Calu3 (cell line): ENCODE measurements at regions of chr2 and their contacts with region 1.

Region 1: DNA sequence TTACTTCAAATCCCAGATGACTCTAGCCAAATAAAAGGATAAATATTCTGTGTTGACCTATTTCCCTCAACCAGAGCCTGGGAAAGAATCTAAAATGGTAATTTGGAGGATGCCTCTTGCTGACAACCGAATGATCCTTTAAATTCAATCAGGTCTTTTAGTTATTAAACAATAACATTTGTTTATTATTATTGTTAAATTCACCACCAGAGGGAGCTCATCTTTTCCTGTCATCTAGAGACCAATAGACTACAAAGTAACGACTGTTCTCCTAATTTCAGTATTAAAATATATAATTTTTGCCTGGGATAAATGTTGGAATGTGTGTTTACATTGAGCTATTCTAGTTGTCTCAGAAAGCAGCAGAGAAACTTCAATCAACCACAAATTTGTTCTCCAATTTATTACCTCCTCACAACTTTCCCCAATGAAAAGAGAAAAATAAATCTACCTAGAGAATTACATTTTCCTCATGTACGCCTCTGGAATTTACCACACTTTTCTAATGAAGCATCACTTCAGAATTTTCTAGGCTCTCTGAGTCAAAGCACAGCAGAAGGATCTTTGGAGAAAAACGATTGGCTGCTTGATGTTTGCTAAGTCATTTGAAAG is 142.7 kb downstream of the SCG2 start:
- DNase-seq: no peak
- H3K4me3 Mint-ChIP-seq: no peak overlapping the region
- H3K27ac Mint-ChIP-seq: no peak overlapping the region
- H3K4me1 Mint-ChIP-seq: peaks cover 9% of the 10 kb centered on the region
- H3K27me3 Mint-ChIP-seq: no peaks in the 10 kb centered on the region
- CTCF ChIP-seq: peak; percentile 25

Region 2: GRCh38 chr2:222100704-222101699 is 1358.4 kb before region 1 on chr2:
- CTCF ChIA-PET with region 1: no interaction called
- intact Hi-C with region 1: no loop called
- DNase-seq: no peak
- H3K4me3 Mint-ChIP-seq: no peak overlapping the region
- H3K27ac Mint-ChIP-seq: no peak overlapping the region
- H3K4me1 Mint-ChIP-seq: no peaks in the 10 kb centered on the region
- H3K27me3 Mint-ChIP-seq: peaks cover 77% of the 10 kb centered on the region
- CTCF ChIP-seq: no peak

Region 3: GRCh38 chr2:223601932-223602666 is 142.7 kb after region 1 on chr2 and contains the start of gene SCG2:
- CTCF ChIA-PET with region 1: interaction called, 4 read pairs
- intact Hi-C with region 1: loop called (anchors 1 kb)
- DNase-seq: peak; percentile 75
- H3K4me3 Mint-ChIP-seq: peak within 1 kb of the TSS; percentile 8
- H3K27ac Mint-ChIP-seq: no peak within 1 kb of the TSS
- H3K4me1 Mint-ChIP-seq: no peaks in the 10 kb centered on the region
- H3K27me3 Mint-ChIP-seq: no peaks in the 10 kb centered on the region
- CTCF ChIP-seq: no peak
- total RNA-seq, gene SCG2: 0.52 and 0.56 TPM in 2 replicates

Region 4: DNA sequence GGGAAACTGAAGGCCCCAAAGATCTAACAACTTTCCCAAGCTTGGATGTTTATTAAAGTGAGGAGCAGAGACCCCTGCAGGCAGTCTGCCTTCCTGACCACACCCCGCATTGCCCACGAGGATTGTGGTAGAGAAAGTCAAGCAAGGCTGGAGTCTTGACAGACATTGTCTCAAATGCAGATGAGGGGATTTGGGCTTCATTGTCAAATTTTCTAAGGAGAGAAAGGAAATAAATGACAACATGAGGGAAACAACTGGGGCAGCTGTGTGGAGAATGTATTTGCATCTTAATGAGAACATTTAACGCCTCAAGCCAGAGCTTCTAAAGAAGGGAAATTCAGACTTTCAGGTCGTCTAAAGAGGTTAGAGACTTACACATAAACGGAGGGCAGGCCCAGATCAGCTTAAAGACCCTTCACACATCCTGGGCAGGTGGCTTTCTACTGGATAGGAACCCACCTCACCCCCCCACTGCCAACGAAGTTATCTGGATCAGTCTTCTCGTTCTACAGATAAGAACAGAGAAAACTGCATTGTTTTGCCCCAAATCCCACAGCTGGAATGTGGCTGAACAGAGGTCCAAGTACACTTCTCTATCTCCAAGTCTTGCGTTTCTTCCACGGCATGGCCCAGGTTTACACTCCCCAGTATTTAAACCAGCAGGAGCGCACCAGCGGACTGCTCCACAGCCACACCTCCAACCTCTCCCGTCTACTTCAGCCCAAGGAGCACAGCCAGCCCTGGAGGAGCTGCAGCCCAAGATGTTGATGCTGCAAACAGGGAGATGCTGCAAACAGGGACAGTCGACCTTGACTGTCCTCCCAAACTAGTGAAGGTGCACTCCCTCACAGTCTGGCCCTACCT is 159.0 kb after region 1 on chr2:
- CTCF ChIA-PET with region 1: no interaction called
- intact Hi-C with region 1: no loop called
- DNase-seq: no peak
- H3K4me3 Mint-ChIP-seq: no peak overlapping the region
- H3K27ac Mint-ChIP-seq: no peak overlapping the region
- H3K4me1 Mint-ChIP-seq: peaks cover 20% of the 10 kb centered on the region
- H3K27me3 Mint-ChIP-seq: no peaks in the 10 kb centered on the region
- CTCF ChIP-seq: no peak

Region 5: GRCh38 chr2:223674998-223675609 is 215.7 kb after region 1 on chr2:
- CTCF ChIA-PET with region 1: no interaction called
- intact Hi-C with region 1: loop called (anchors 10 kb)
- DNase-seq: peak; percentile 69
- H3K4me3 Mint-ChIP-seq: no peak overlapping the region
- H3K27ac Mint-ChIP-seq: peak overlapping the region; percentile 25
- H3K4me1 Mint-ChIP-seq: peaks cover 27% of the 10 kb centered on the region
- H3K27me3 Mint-ChIP-seq: no peaks in the 10 kb centered on the region
- CTCF ChIP-seq: peak; percentile 70

Region 6: DNA sequence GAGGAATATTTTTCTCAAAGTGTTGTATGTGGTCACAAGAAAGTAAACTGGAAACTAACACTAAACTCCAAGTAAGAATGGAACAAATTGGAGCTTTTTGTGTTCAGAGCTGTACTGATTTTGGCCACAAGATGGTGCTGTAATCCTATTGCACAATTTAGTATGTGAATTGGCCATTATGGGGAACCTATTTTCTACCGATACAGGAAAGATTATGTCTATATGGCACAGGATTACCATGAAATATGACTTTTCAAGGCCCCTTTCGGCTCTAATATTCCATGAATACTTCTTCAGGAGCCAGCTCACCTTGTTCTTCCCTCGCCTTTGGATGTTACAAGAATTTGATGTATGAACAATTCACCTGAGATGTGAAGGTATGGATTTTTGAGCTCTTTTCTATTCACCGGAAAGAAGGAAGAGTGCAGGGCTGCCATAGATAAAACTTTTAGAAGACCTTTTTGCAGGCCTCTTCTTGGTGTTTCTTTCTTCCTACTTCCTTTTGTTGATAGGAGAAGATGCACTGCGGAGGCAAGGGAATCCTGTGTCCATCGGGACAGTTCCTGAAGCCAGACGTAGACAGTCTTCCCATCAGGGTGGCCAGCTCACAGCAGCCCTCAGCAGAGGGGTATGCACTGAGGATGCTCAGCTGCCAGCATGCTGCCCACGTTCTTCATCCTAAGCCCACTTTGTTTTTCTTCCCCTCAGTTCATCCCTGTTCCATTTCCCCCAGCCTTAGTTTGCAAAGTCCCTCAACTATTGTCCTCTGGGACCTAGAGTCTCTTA is 511.1 kb after region 1 on chr2:
- CTCF ChIA-PET with region 1: no interaction called
- intact Hi-C with region 1: no loop called
- DNase-seq: peak; percentile 62
- H3K4me3 Mint-ChIP-seq: no peak overlapping the region
- H3K27ac Mint-ChIP-seq: no peak overlapping the region
- H3K4me1 Mint-ChIP-seq: no peaks in the 10 kb centered on the region
- H3K27me3 Mint-ChIP-seq: no peaks in the 10 kb centered on the region
- CTCF ChIP-seq: peak; percentile 73